Activated CD4-positive, alpha-beta T cell treated with anti-CD3 and anti-CD28 coated beads, Interleukin-2, amount 10 ng/mL, durations not matched to agents 24 days and 14 days (primary cell): ENCODE measurements at regions of chr5 and their contacts with region 1.

Region 1: GRCh38 chr5:170333161-170333910 is 35.8 kb upstream of the LCP2 start:
- DNase-seq: peak; percentile 83
- H3K4me3 Mint-ChIP-seq: peak overlapping the region; percentile 80
- H3K27ac Mint-ChIP-seq: no peak overlapping the region
- H3K4me1 Mint-ChIP-seq: peaks cover 58% of the 10 kb centered on the region
- H3K27me3 Mint-ChIP-seq: no peaks in the 10 kb centered on the region

Region 2: DNA sequence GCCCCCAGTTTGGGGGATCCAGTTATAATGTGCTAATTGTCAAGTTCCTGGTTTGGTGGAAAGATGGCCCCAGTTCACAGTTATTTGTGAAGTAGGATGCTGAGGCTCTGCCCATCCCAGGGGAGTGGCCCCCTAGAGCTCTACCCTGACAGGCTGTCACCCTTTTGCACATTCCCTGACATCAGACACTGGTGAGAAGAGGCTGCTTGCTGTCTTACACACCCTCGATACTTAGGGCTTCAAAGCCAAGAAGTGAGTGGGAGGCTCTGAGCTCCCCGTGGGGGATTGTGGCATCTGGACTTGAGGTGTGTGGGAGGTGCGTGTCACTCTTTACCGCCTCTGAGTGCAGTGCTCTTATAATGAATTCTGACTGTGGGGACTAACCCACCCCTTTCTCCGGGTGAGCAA is 527.8 kb before region 1 on chr5:
- intact Hi-C with region 1: loop called (anchors 2 kb)
- DNase-seq: peak; percentile 76
- H3K4me3 Mint-ChIP-seq: peak overlapping the region; percentile 54
- H3K27ac Mint-ChIP-seq: peak overlapping the region; percentile 88
- H3K4me1 Mint-ChIP-seq: peaks cover 41% of the 10 kb centered on the region
- H3K27me3 Mint-ChIP-seq: no peaks in the 10 kb centered on the region

Region 3: GRCh38 chr5:170267431-170268152 is 65.7 kb before region 1 on chr5:
- intact Hi-C with region 1: loop called (anchors 1 kb)
- DNase-seq: peak; percentile 93
- H3K4me3 Mint-ChIP-seq: peak overlapping the region; percentile 73
- H3K27ac Mint-ChIP-seq: peak overlapping the region; percentile 77
- H3K4me1 Mint-ChIP-seq: peaks cover 79% of the 10 kb centered on the region
- H3K27me3 Mint-ChIP-seq: no peaks in the 10 kb centered on the region

Region 4: GRCh38 chr5:170302653-170303501 is 30.5 kb before region 1 on chr5:
- intact Hi-C with region 1: loop called (anchors 1 kb)
- DNase-seq: peak; percentile 91
- H3K4me3 Mint-ChIP-seq: peak overlapping the region; percentile 81
- H3K27ac Mint-ChIP-seq: peak overlapping the region; percentile 90
- H3K4me1 Mint-ChIP-seq: peaks cover 72% of the 10 kb centered on the region
- H3K27me3 Mint-ChIP-seq: no peaks in the 10 kb centered on the region